ENCODE measurements at regions of chr9 and their contacts with region 1.

Region 1: GRCh38 chr9:117247266-117247665 is 167.6 kb downstream of the ASTN2 start:
- DNase-seq: peak; percentile 3
- H3K4me3 ChIP-seq: no peak overlapping the region
- H3K27ac ChIP-seq: no peak overlapping the region
- H3K4me1 ChIP-seq: no peaks in the 10 kb centered on the region
- H3K27me3 ChIP-seq: no peaks in the 10 kb centered on the region
- CTCF ChIP-seq: peak; percentile 22 to 44

Region 2: GRCh38 chr9:117276444-117276843 is 29.2 kb after region 1 on chr9:
- CTCF ChIA-PET with region 1: no interaction called
- dilution Hi-C with region 1: no loop called
- in situ Hi-C with region 1: no loop called
- intact Hi-C with region 1: loop called (anchors 1 kb)
- DNase-seq: no peak
- H3K4me3 ChIP-seq: no peak overlapping the region
- H3K27ac ChIP-seq: no peak overlapping the region
- H3K4me1 ChIP-seq: no peaks in the 10 kb centered on the region
- H3K27me3 ChIP-seq: no peaks in the 10 kb centered on the region
- CTCF ChIP-seq: no peak

Region 3: GRCh38 chr9:117411548-117411947 is 164.3 kb after region 1 on chr9:
- CTCF ChIA-PET with region 1: no interaction called
- dilution Hi-C with region 1: no loop called
- in situ Hi-C with region 1: no loop called
- intact Hi-C with region 1: loop called (anchors 5 kb)
- DNase-seq: peak; percentile 19
- H3K4me3 ChIP-seq: no peak overlapping the region
- H3K27ac ChIP-seq: no peak overlapping the region
- H3K4me1 ChIP-seq: peaks cover 6% of the 10 kb centered on the region
- H3K27me3 ChIP-seq: peaks cover 21% of the 10 kb centered on the region
- CTCF ChIP-seq: peak; percentile 79 to 84

Measured in mammary epithelial cell (primary cell).